A549 (cell line): ENCODE measurements at regions of chr16 and their contacts with region 1.

Region 1: GRCh38 chr16:69150146-69150865 is 17.9 kb downstream of the UTP4 start:
- DNase-seq: peak; percentile 76 to 77
- ATAC-seq: peak; percentile 89 to 97
- H3K4me3 ChIP-seq: no peak overlapping the region
- H3K27ac ChIP-seq: no peak overlapping the region
- H3K4me1 ChIP-seq: no peaks in the 10 kb centered on the region
- CTCF ChIP-seq: peak; percentile 90
- EP300 ChIP-seq: no peak
- POLR2A ChIP-seq: no peak
- RAD21 ChIP-seq: peak; percentile 83 to 87

Region 2: GRCh38 chr16:69049146-69049545 is 101.2 kb before region 1 on chr16:
- CTCF ChIA-PET with region 1: no interaction called
- POLR2A ChIA-PET with region 1: no interaction called
- DNase-seq: peak in 1 of 2 experiments; percentile 43
- ATAC-seq: peak; percentile 78 to 85; a peak in 5 of 6 replicates
- H3K4me3 ChIP-seq: no peak overlapping the region
- H3K27ac ChIP-seq: peak overlapping the region; percentile 75 to 85
- H3K4me1 ChIP-seq: peaks cover 35% of the 10 kb centered on the region
- CTCF ChIP-seq: no peak
- EP300 ChIP-seq: no peak
- POLR2A ChIP-seq: no peak
- RAD21 ChIP-seq: no peak

Region 3: DNA sequence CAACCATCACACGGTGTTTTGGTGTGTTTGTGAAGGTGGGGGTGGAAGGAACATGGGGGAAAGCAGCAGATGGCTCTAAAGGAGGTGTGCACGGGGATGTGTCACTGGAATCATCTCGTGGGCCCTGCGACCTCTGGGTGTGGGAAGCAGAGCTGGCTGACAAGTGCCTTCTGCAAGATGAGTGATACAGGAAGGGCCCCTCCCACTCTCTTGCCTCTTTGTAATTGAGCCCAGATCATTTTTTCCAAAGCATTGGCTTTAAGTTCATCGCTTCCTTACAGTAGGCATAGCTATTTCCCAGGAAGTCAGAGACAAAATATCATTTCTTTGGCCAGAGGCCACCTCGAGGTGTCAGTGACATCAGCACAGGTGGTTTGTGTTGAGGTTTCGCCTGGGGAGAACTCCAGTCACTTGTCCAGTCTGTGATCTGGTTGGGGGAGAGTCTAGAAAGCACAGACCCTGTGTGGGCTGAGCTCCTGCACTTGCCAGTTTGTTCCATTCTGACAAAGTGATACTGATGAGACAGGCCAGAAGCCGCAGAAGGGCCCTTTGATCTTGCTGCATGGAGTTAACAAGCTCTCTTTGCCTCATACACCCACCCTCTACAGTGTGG is 16.0 kb after region 1 on chr16:
- CTCF ChIA-PET with region 1: interaction called, 14 read pairs
- POLR2A ChIA-PET with region 1: no interaction called
- DNase-seq: no peak
- ATAC-seq: no peak
- H3K4me3 ChIP-seq: no peak overlapping the region
- H3K27ac ChIP-seq: no peak overlapping the region
- H3K4me1 ChIP-seq: no peaks in the 10 kb centered on the region
- CTCF ChIP-seq: no peak
- EP300 ChIP-seq: no peak
- POLR2A ChIP-seq: no peak
- RAD21 ChIP-seq: no peak

Region 4: GRCh38 chr16:69176033-69176800 is 25.9 kb after region 1 on chr16:
- CTCF ChIA-PET with region 1: interaction called, 12 read pairs
- POLR2A ChIA-PET with region 1: no interaction called
- DNase-seq: no peak
- ATAC-seq: no peak
- H3K4me3 ChIP-seq: no peak overlapping the region
- H3K27ac ChIP-seq: no peak overlapping the region
- H3K4me1 ChIP-seq: peaks cover 37% of the 10 kb centered on the region
- CTCF ChIP-seq: no peak
- EP300 ChIP-seq: no peak
- POLR2A ChIP-seq: no peak
- RAD21 ChIP-seq: no peak

Region 5: GRCh38 chr16:69186642-69187445 is 36.5 kb after region 1 on chr16 and contains the start of gene SNTB2:
- CTCF ChIA-PET with region 1: interaction called, 14 read pairs
- POLR2A ChIA-PET with region 1: no interaction called
- DNase-seq: peak; percentile 87 to 90
- ATAC-seq: peak; percentile 92 to 95
- H3K4me3 ChIP-seq: peak within 1 kb of the TSS; percentile 74
- H3K27ac ChIP-seq: peak within 1 kb of the TSS; percentile 86 to 97
- H3K4me1 ChIP-seq: peaks cover 34% of the 10 kb centered on the region
- CTCF ChIP-seq: no peak
- EP300 ChIP-seq: no peak
- POLR2A ChIP-seq: peak; percentile 93
- RAD21 ChIP-seq: no peak
- polyA plus RNA-seq, gene SNTB2: 19.2 and 20.8 TPM in 2 replicates

Region 6: GRCh38 chr16:69286941-69287713 is 136.8 kb after region 1 on chr16:
- CTCF ChIA-PET with region 1: interaction called, 133 read pairs
- POLR2A ChIA-PET with region 1: interaction called, 3 read pairs
- DNase-seq: peak; percentile 25 to 70
- ATAC-seq: peak in 1 of 2 experiments; percentile 64; a peak in 3 of 6 replicates
- H3K4me3 ChIP-seq: no peak overlapping the region
- H3K27ac ChIP-seq: peak overlapping the region in 1 of 2 experiments; percentile 38; a peak in 1 of 6 replicates
- H3K4me1 ChIP-seq: peaks cover 12% of the 10 kb centered on the region; the same call in 2 of the 3 replicates
- CTCF ChIP-seq: peak; percentile 91
- EP300 ChIP-seq: no peak
- POLR2A ChIP-seq: no peak
- RAD21 ChIP-seq: peak; percentile 68 to 78

Region 7: GRCh38 chr16:69301861-69302260 is 151.6 kb after region 1 on chr16:
- CTCF ChIA-PET with region 1: interaction called, 10 read pairs
- POLR2A ChIA-PET with region 1: no interaction called
- DNase-seq: no peak
- ATAC-seq: no peak
- H3K4me3 ChIP-seq: no peak overlapping the region
- H3K27ac ChIP-seq: no peak overlapping the region
- H3K4me1 ChIP-seq: no peaks in the 10 kb centered on the region
- CTCF ChIP-seq: no peak
- EP300 ChIP-seq: no peak
- POLR2A ChIP-seq: no peak
- RAD21 ChIP-seq: no peak